ENCODE measurements at regions of chr6 and their contacts with region 1.

Region 1: DNA sequence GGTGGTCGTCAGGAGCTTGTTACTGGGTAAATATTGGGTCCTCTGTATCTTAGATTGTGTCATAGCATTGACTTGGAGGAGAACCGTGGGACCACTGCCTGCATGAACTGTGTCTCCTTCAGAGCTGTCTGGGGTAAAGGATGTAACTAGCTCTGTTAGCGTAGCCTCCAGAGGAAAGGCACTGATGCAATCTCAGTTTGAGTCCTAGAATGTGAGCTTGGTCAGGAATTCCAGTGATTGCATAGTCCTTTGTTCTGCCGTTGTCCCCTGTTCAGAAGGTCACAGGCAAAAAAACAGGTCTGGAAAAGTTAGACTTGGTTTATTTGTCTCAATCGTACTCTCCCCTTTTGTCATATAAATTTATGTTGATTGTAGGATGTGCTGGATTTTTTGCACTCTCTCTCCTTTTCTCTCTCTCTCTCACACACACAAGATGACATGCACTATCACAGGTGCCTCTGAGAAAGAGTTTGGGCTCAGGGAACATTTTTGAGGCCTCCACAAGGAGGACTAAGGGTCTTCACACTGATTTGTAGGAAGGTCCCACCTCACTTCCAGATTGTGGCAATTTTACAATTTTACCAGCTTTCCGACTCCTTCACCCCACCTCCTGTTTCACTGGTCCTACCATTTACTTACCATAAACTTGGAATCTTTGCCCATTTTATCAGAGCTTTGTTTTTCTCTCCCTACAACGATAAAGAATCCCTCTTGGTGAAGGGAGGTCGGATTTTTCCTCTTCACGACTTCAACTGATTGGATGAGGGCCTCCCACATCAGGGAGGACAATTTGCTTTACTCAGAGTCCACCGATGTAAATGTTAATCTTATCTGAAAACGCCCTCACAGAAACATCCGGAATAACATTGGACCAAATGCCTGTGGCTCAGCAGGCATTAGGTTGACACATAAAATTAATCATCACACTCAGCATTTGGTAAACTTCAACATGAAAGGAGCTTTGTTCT is 7.0 kb upstream of the DACT2 start:
- DNase-seq: peak; percentile 73 to 75
- H3K4me3 ChIP-seq: no peak overlapping the region
- H3K4me3 Mint-ChIP-seq: peak overlapping the region; percentile 54
- H3K27ac Mint-ChIP-seq: peak overlapping the region; percentile 89
- H3K4me1 ChIP-seq: peaks cover 56% of the 10 kb centered on the region
- H3K4me1 Mint-ChIP-seq: peaks cover 38% of the 10 kb centered on the region
- H3K27me3 ChIP-seq: no peaks in the 10 kb centered on the region
- H3K27me3 Mint-ChIP-seq: no peaks in the 10 kb centered on the region
- CTCF ChIP-seq: no peak

Region 2: DNA sequence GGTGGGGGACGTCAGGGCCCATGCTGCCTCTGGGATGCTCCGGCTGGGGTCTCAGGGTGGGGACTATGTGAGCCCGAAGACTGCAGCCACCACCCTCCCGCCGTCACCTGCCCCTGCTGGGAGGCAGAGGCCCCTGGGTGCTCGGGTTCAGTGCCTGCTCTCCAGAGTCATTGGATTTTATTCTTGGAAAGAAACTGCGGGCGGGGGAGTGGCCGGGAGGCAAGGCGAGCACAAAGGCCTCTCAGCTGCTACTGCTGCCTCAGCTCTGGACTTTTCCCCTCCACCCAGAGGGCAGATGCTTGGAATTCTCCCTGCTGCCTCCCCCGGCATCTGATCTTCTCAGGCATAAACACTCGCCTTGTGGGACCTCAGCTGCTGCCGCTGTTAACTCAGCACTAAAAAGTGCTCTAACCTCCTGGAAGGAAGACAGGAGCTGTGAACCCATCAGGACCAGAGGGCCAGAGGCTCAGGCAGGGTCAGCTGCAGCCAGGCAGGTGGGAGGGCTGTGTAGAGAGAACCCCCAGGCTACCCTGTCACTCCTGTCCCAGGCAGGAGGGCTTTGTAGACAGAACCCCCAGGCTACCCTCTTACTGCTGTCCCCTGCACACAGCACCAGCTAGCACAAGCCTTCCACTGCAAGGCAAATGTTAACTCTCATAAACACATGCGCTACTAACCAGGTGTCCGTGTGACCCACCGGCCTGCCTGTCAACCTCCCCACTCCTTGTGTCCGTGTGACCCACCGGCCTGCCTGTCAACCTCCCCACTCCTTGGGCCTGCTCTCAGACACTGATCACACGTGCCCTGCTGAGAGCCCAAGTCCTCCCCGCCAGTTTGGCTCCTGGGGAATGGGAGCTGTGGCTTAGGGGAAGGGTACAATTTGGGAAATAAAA is 238.2 kb before region 1 on chr6:
- CTCF ChIA-PET with region 1: no interaction called
- POLR2A ChIA-PET with region 1: no interaction called
- intact Hi-C with region 1: loop called (anchors 10 kb)
- DNase-seq: peak; percentile 88 to 93
- H3K4me3 ChIP-seq: no peak overlapping the region
- H3K4me3 Mint-ChIP-seq: peak overlapping the region; percentile 48
- H3K27ac Mint-ChIP-seq: peak overlapping the region; percentile 92
- H3K4me1 ChIP-seq: peaks cover 57% of the 10 kb centered on the region
- H3K4me1 Mint-ChIP-seq: peaks cover 33% of the 10 kb centered on the region
- H3K27me3 ChIP-seq: no peaks in the 10 kb centered on the region
- H3K27me3 Mint-ChIP-seq: no peaks in the 10 kb centered on the region
- CTCF ChIP-seq: no peak

Region 3: DNA sequence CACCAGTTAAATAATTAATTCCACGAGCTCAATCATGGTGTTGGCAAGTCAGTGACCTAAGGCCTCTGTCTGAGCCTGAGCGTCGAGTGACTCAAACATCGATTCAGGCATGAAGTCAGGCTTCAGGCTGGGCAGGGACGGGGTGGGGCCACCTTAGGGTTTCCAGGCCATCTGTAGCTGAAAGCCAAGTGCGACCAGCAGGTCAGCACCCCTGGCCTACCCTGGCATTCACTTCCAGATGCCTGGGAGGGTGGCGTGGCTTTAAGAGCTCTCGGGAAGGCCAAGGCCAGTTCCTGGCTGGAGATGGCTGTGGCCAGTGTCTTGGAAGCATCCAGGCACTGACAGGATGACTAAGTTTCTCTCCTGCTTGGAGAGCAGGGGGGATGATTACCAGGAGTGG is 120.4 kb before region 1 on chr6:
- CTCF ChIA-PET with region 1: no interaction called
- POLR2A ChIA-PET with region 1: no interaction called
- intact Hi-C with region 1: no loop called
- DNase-seq: no peak
- H3K4me3 ChIP-seq: no peak overlapping the region
- H3K4me3 Mint-ChIP-seq: no peak overlapping the region
- H3K27ac Mint-ChIP-seq: no peak overlapping the region
- H3K4me1 ChIP-seq: no peaks in the 10 kb centered on the region
- H3K4me1 Mint-ChIP-seq: no peaks in the 10 kb centered on the region
- H3K27me3 ChIP-seq: no peaks in the 10 kb centered on the region
- H3K27me3 Mint-ChIP-seq: no peaks in the 10 kb centered on the region
- CTCF ChIP-seq: no peak

Region 4: GRCh38 chr6:168264593-168265335 is 61.8 kb before region 1 on chr6:
- CTCF ChIA-PET with region 1: interaction called, 3 read pairs
- POLR2A ChIA-PET with region 1: no interaction called
- intact Hi-C with region 1: loop called (anchors 1 kb)
- DNase-seq: peak; percentile 78 to 83
- H3K4me3 ChIP-seq: 0 out of 2 replicates have a peak overlapping the region, but pooled peaks have one; percentile 8
- H3K4me3 Mint-ChIP-seq: peak overlapping the region; percentile 53
- H3K27ac Mint-ChIP-seq: peak overlapping the region; percentile 60
- H3K4me1 ChIP-seq: peaks cover 62% of the 10 kb centered on the region
- H3K4me1 Mint-ChIP-seq: peaks cover 36% of the 10 kb centered on the region
- H3K27me3 ChIP-seq: no peaks in the 10 kb centered on the region
- H3K27me3 Mint-ChIP-seq: no peaks in the 10 kb centered on the region
- CTCF ChIP-seq: no peak

Region 5: GRCh38 chr6:168274037-168274952 is 52.3 kb before region 1 on chr6:
- CTCF ChIA-PET with region 1: interaction called, 3 read pairs
- POLR2A ChIA-PET with region 1: no interaction called
- intact Hi-C with region 1: loop called (anchors 2 kb)
- DNase-seq: peak; percentile 83 to 87
- H3K4me3 ChIP-seq: peak overlapping the region; percentile 27
- H3K4me3 Mint-ChIP-seq: peak overlapping the region; percentile 73
- H3K27ac Mint-ChIP-seq: peak overlapping the region; percentile 65
- H3K4me1 ChIP-seq: peaks cover 39% of the 10 kb centered on the region
- H3K4me1 Mint-ChIP-seq: peaks cover 41% of the 10 kb centered on the region
- H3K27me3 ChIP-seq: no peaks in the 10 kb centered on the region
- H3K27me3 Mint-ChIP-seq: no peaks in the 10 kb centered on the region
- CTCF ChIP-seq: no peak

Region 6: DNA sequence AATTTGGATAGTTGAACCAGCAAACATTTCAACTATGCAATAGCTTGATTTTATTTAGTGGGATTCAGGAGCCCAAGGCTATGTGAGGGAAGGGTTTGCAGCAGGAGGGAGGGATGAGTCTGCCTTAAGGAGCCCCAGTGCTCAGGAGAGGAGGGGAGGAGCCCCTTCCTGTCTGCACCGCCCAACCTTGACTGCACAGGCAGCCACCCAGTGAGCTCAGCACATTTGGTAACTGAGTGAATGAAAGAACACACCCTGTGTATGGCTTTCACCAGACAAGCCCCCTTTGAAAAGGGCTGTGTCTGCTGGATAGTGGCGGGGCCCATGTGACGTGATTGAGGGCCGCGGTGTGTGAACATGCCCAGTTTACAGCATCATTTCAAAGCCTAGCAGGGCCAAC is 24.0 kb before region 1 on chr6:
- CTCF ChIA-PET with region 1: no interaction called
- POLR2A ChIA-PET with region 1: no interaction called
- intact Hi-C with region 1: loop called (anchors 2 kb)
- DNase-seq: no peak
- H3K4me3 ChIP-seq: no peak overlapping the region
- H3K4me3 Mint-ChIP-seq: peak overlapping the region; percentile 65
- H3K27ac Mint-ChIP-seq: no peak overlapping the region
- H3K4me1 ChIP-seq: peaks cover 24% of the 10 kb centered on the region
- H3K4me1 Mint-ChIP-seq: peaks cover 12% of the 10 kb centered on the region
- H3K27me3 ChIP-seq: no peaks in the 10 kb centered on the region
- H3K27me3 Mint-ChIP-seq: no peaks in the 10 kb centered on the region
- CTCF ChIP-seq: no peak

Region 7: DNA sequence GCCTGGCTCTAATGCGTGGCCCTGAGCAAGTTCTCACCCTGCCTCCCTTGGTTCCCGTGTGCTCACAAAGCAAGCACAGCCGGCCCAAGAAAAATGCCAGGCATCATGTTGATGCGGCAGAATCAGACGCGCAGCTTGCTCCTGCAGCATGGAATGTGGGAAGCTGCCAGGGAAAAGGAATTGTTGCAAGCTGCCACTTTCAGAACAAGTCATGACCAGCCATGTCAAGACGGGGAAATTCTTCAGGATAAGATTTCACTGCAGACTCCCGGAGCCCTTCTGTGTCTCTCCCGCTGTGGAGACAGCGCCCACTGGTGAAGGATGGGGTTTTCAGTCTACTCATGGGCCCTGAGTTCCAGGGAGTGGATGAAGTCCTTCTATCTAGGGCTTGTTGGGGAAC is 11.6 kb before region 1 on chr6:
- CTCF ChIA-PET with region 1: no interaction called
- POLR2A ChIA-PET with region 1: no interaction called
- intact Hi-C with region 1: no loop called
- DNase-seq: no peak
- H3K4me3 ChIP-seq: no peak overlapping the region
- H3K4me3 Mint-ChIP-seq: no peak overlapping the region
- H3K27ac Mint-ChIP-seq: no peak overlapping the region
- H3K4me1 ChIP-seq: peaks cover 30% of the 10 kb centered on the region
- H3K4me1 Mint-ChIP-seq: peaks cover 11% of the 10 kb centered on the region
- H3K27me3 ChIP-seq: no peaks in the 10 kb centered on the region
- H3K27me3 Mint-ChIP-seq: no peaks in the 10 kb centered on the region
- CTCF ChIP-seq: peak in 1 of 2 experiments; percentile 12

Measured in Caco-2 (cell line).